Calu3 (cell line): ENCODE measurements at regions of chr16 and their contacts with region 1.

Region 1: GRCh38 chr16:66406534-66407221 is 20.4 kb upstream of the BEAN1 start:
- DNase-seq: peak; percentile 93
- H3K4me3 Mint-ChIP-seq: peak overlapping the region; percentile 78
- H3K27ac Mint-ChIP-seq: peak overlapping the region; percentile 64
- H3K4me1 Mint-ChIP-seq: peaks cover 35% of the 10 kb centered on the region
- H3K27me3 Mint-ChIP-seq: peaks cover 30% of the 10 kb centered on the region
- CTCF ChIP-seq: peak; percentile 93

Region 2: GRCh38 chr16:66026211-66026610 is 380.5 kb before region 1 on chr16:
- CTCF ChIA-PET with region 1: no interaction called
- intact Hi-C with region 1: no loop called
- DNase-seq: peak; percentile 9
- H3K4me3 Mint-ChIP-seq: no peak overlapping the region
- H3K27ac Mint-ChIP-seq: no peak overlapping the region
- H3K4me1 Mint-ChIP-seq: no peaks in the 10 kb centered on the region
- H3K27me3 Mint-ChIP-seq: peaks cover 59% of the 10 kb centered on the region
- CTCF ChIP-seq: peak; percentile 27

Region 3: GRCh38 chr16:66315210-66315825 is 91.4 kb before region 1 on chr16:
- CTCF ChIA-PET with region 1: no interaction called
- intact Hi-C with region 1: no loop called
- DNase-seq: peak; percentile 80
- H3K4me3 Mint-ChIP-seq: no peak overlapping the region
- H3K27ac Mint-ChIP-seq: no peak overlapping the region
- H3K4me1 Mint-ChIP-seq: no peaks in the 10 kb centered on the region
- H3K27me3 Mint-ChIP-seq: peaks cover 64% of the 10 kb centered on the region
- CTCF ChIP-seq: peak; percentile 96

Region 4: GRCh38 chr16:66511615-66512500 is 105.2 kb after region 1 on chr16:
- CTCF ChIA-PET with region 1: interaction called, 11 read pairs
- intact Hi-C with region 1: loop called (anchors 2 kb)
- DNase-seq: peak; percentile 80
- H3K4me3 Mint-ChIP-seq: peak overlapping the region; percentile 43
- H3K27ac Mint-ChIP-seq: peak overlapping the region; percentile 99
- H3K4me1 Mint-ChIP-seq: peaks cover 95% of the 10 kb centered on the region
- H3K27me3 Mint-ChIP-seq: no peaks in the 10 kb centered on the region
- CTCF ChIP-seq: no peak

Region 5: GRCh38 chr16:66552286-66553177 is 145.9 kb after region 1 on chr16 and contains the start of gene CKLF:
- CTCF ChIA-PET with region 1: interaction called, 7 read pairs
- intact Hi-C with region 1: loop called (anchors 5 kb)
- DNase-seq: peak; percentile 95
- H3K4me3 Mint-ChIP-seq: peak within 1 kb of the TSS; percentile 92
- H3K27ac Mint-ChIP-seq: peak within 1 kb of the TSS; percentile 96
- H3K4me1 Mint-ChIP-seq: peaks cover 65% of the 10 kb centered on the region
- H3K27me3 Mint-ChIP-seq: no peaks in the 10 kb centered on the region
- CTCF ChIP-seq: no peak
- total RNA-seq, gene CKLF: 217 and 293 TPM in 2 replicates

Region 6: GRCh38 chr16:66740010-66740409 is 333.3 kb after region 1 on chr16:
- CTCF ChIA-PET with region 1: interaction called, 4 read pairs
- intact Hi-C with region 1: loop called (anchors 2 kb)
- DNase-seq: no peak
- H3K4me3 Mint-ChIP-seq: peak overlapping the region; percentile 25
- H3K27ac Mint-ChIP-seq: peak overlapping the region; percentile 89
- H3K4me1 Mint-ChIP-seq: peaks cover 34% of the 10 kb centered on the region
- H3K27me3 Mint-ChIP-seq: no peaks in the 10 kb centered on the region
- CTCF ChIP-seq: peak; percentile 69